Dorsolateral prefrontal cortex (tissue), 120 donors: ENCODE measurements at regions of chr12 and their contacts with region 1.

Region 1: GRCh38 chr12:123388177-123388947 is 4.4 kb downstream of the KMT5A start:
- DNase-seq: peak; percentile 53 to 86 (median 71)
- H3K4me3 ChIP-seq: peak overlapping the region; percentile 47 to 93 (median 70)
- H3K27ac ChIP-seq: peak overlapping the region; percentile 75 to 98 (median 93)
- H3K27me3 ChIP-seq: no peaks in the 10 kb centered on the region
- CTCF ChIP-seq: peak in 50 of 56 donors; percentile 21 to 71 (median 46)

Region 2: GRCh38 chr12:123271001-123271729 is 117.2 kb before region 1 on chr12:
- intact Hi-C with region 1: loop called in 1 of 2 experiments (anchors 5 kb)
- DNase-seq: peak in 9 of 10 donors; percentile 56 to 83 (median 68)
- H3K4me3 ChIP-seq: peak overlapping the region; percentile 50 to 87 (median 73)
- H3K27ac ChIP-seq: peak overlapping the region in 56 of 59 donors; percentile 88 to 99 (median 98)
- H3K27me3 ChIP-seq: no peaks in the 10 kb centered on the region
- CTCF ChIP-seq: peak in 39 of 56 donors; percentile 5 to 74 (median 47)

Region 3: GRCh38 chr12:123457980-123458783 is 69.8 kb after region 1 on chr12 and contains the start of gene SNRNP35:
- intact Hi-C with region 1: loop called (anchors 5 kb)
- DNase-seq: peak; percentile 65 to 83 (median 77)
- H3K4me3 ChIP-seq: peak within 1 kb of the TSS; percentile 63 to 97 (median 83)
- H3K27ac ChIP-seq: peak within 1 kb of the TSS; percentile 94 to 100 (median 99)
- H3K27me3 ChIP-seq: no peaks in the 10 kb centered on the region
- CTCF ChIP-seq: peak in 13 of 56 donors; percentile 2 to 38 (median 11)
- total RNA-seq, gene SNRNP35: 18.2 to 41.5 (median 27.9) TPM

Region 4: DNA sequence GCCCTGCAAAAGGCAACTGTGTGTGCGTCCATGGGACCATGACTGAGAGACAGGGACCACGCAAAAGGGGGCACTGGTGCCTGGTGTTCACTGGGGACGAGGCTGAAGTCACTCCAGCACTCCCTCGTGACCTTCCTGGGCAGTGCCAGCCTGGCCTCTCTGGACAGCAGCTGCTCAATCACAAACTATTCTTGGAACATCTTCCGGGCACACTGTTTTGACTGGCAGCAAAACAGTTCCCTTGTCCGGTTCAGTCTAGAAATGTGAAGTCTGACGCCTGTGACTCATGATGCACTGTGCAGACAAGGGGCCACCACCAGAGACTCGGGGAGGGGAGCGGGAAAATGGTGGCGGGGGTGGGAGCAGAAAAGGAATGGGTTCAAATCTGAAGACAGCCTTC is 90.4 kb after region 1 on chr12:
- intact Hi-C with region 1: loop called in 1 of 2 experiments (anchors 5 kb)
- DNase-seq: peak; percentile 14 to 90 (median 84)
- H3K4me3 ChIP-seq: peak overlapping the region in 53 of 59 donors; percentile 8 to 65 (median 37)
- H3K27ac ChIP-seq: peak overlapping the region; percentile 91 to 100 (median 99)
- H3K27me3 ChIP-seq: no peaks in the 10 kb centered on the region
- CTCF ChIP-seq: peak in 4 of 56 donors; percentile 6 to 17 (median 16)

Region 5: DNA sequence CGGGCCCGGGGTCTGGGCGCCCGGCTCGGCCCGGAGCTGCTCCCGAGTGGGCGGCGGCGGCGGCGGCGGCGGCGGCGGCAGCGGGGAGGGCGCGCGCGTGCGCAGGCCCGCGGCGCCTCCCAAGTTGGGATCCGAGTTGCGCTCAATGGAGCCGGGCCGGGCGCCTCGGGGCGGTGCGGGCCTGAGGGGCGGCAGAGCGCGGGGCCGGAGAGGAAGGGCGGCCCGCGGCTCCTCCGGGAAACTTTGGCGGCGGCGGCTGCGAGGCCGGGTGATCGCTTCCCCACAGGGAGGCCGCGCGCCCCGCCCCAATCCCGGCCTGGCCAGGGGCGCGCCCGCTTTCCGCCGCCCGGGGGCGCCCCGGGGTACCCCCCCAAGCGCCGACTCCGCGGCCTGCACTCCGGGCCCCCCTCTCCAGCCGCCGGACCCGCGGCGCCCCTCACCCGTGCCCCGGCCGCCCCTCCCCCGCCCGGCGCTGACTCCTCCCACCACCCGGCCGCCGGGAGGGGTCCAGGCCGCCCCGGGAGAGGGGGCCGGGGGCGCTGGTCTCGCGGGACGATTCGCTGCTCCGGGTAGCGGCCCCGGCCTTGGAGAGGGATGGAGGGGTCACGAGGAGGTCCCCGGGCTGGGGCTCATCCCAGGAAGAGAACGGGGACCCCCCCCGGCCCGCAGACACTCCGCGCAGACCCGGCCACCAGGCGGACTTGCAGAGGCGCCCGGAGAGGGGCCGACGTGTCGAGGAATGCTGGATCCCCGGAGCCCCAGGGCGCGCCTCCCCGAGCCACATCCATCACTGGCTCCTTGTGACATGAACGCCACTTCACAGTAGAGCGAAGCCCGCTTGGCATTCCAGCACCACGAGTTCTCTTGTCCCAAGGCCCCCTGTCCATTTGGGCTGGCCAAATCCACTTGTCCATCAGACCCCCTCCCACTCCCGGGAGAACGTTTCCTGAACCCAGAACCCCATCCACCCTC is 145.6 kb after region 1 on chr12 and contains the start of gene RILPL1:
- intact Hi-C with region 1: loop called in 1 of 2 experiments (anchors 5 kb)
- DNase-seq: peak; percentile 36 to 78 (median 46)
- H3K4me3 ChIP-seq: peak within 1 kb of the TSS; percentile 68 to 94 (median 81)
- H3K27ac ChIP-seq: peak within 1 kb of the TSS; percentile 58 to 97 (median 94)
- H3K27me3 ChIP-seq: no peaks in the 10 kb centered on the region
- CTCF ChIP-seq: peak in 47 of 56 donors; percentile 1 to 71 (median 34)
- total RNA-seq, gene RILPL1: 26.8 to 64.9 (median 37.5) TPM

Region 6: GRCh38 chr12:123580772-123581171 is 192.4 kb after region 1 on chr12:
- intact Hi-C with region 1: loop called (anchors 1 to 2 kb)
- DNase-seq: no peak
- H3K4me3 ChIP-seq: no peak overlapping the region
- H3K27ac ChIP-seq: peak overlapping the region in 1 of 59 donors; percentile 3
- H3K27me3 ChIP-seq: no peaks in the 10 kb centered on the region
- CTCF ChIP-seq: no peak

Region 7: DNA sequence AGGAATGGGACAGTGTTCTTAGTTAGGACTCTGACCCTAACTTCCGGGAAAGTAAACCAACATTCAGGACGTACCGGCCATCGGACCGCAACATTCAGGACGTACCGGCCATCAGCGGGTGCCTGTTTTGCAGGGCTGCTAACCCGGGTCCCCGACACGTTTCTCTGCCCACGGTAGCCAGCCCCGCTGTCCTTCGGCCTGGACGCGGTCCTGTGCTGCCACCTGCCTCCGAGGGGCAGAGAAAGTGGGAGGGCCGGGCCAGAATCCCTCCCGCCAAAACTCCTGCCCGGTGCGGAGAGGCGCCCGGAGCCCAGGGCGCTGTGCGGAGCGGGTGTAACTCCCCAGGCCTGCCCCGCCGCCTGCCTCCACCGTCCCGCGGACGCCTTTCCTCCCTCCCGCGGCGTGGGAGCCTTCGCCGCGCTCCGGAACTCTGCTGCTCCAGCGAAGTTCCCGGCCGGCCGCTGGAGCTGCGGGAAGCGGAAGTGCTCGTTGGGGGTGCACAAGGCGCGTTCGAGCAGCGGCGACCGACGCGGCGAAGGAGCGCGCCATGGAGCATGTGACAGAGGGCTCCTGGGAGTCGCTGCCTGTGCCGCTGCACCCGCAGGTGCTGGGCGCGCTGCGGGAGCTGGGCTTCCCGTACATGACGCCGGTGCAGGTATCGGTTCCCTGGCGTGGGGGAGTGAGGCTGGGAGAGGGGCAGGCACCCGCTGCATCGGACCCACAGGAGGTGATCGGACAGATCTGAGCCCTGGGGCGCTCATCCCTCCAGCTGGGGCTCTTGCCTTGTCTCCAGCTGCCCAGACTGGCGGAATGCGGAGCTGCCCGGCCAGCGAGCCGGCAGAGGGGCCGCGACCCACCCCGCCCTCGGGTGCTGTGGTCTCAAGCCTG is 213.5 kb after region 1 on chr12 and contains the start of gene DDX55:
- intact Hi-C with region 1: loop called (anchors 5 kb)
- DNase-seq: peak; percentile 59 to 89 (median 84)
- H3K4me3 ChIP-seq: peak within 1 kb of the TSS; percentile 75 to 100 (median 98)
- H3K27ac ChIP-seq: peak within 1 kb of the TSS; percentile 26 to 96 (median 88)
- H3K27me3 ChIP-seq: no peaks in the 10 kb centered on the region
- CTCF ChIP-seq: peak; percentile 19 to 88 (median 68)
- total RNA-seq, gene DDX55: 14.3 to 32.8 (median 20.8) TPM

Region 8: GRCh38 chr12:124289634-124290598 is 901.6 kb after region 1 on chr12:
- intact Hi-C with region 1: no loop called
- DNase-seq: peak in 1 of 10 donors; percentile 28
- H3K4me3 ChIP-seq: peak overlapping the region in 24 of 59 donors; percentile 4 to 42 (median 22)
- H3K27ac ChIP-seq: peak overlapping the region in 10 of 59 donors; percentile 7 to 48 (median 17)
- H3K27me3 ChIP-seq: peaks cover 0 to 3% (median 0%) of the 10 kb centered on the region in 45 donors
- CTCF ChIP-seq: no peak